G401 (cell line): ENCODE measurements at regions of chr3 and their contacts with region 1.

Region 1: DNA sequence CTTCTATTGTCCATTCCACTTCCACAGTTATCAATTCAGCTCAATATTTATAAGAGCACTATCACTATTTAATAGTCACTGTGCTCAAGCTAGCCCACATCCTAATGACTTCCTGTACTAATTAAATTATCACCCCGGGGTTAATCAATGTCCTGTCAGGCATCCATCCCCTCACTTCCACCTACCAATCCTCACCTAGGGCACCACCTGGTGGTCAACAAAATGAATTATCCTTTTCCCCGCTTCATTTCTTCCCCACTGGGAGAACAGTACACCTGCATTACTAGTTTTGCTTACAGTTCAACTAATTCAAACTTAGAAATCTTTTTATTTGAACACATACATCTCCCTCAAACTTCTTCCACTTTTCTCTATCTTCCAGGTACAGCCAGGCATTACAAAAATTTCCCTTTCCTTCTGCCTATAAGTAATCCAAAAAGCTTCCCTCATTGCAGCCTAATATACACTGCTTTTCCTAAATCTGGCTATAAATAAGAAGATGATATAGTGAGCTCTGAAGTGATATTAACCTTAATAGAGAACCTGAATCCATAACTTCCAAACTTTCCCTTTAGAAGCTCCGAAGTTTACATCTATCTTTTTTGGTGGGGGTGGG is 68.5 kb downstream of the TMCC1 start:
- DNase-seq: peak; percentile 58

Region 2: GRCh38 chr3:129453732-129454131 is 371.3 kb before region 1 on chr3:
- in situ Hi-C with region 1: no loop called
- DNase-seq: no peak

Region 3: DNA sequence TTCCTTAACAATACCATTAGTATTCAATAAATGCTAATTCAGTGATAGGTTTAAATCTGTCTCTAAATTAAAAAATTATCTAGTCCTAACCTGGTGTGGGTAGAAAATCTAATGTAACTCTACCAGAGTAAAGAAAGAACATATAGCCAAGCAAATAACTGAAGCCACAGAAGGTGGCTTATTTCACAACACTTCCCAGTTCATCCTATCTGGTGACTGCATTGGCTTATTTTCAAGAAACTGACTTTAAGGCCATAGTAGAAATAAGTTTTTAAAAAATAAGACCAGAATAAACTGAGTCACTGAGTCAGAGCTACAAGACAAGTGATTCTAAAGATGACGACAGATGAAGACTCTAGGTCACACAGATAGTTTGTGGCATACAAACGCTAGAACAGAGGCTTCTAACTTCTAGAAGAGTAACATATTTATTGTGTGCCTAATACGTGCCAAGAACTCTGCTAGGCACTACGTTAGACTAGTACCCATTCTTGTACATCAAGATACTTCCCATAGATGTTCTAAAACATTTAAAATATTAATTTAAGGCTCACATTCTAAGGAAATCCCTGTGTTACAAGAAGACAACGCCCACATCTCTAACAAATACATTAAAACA is 42.6 kb after region 1 on chr3:
- in situ Hi-C with region 1: no loop called
- DNase-seq: no peak

Region 4: DNA sequence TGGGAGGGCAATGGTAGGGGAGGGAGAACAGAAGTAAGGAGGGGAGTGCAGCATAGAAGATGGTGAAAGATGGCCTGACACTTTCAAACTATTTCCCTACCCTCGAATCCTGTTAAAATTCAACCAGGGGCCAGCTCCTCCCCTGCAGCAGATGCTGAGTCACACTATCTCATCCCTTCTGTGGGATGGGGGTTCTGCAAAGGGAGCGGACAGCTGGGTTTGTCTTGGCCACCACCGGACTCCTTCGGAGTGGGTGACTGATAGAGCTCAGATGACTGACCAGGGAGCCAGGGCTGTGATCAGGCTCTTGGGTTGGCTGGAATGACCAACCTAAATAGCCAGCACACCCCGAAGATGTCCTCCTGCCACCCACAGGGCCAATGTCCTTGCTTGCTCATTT is 102.0 kb after region 1 on chr3:
- in situ Hi-C with region 1: loop called (anchors 5 kb)
- DNase-seq: no peak